Activated CD4-positive, alpha-beta memory T cell treated with anti-CD3 and anti-CD28 coated beads, Interleukin-2, amount 10 ng/mL, durations not matched to agents 7 days and 5 days (primary cell): ENCODE measurements at regions of chr12 and their contacts with region 1.

Region 1: DNA sequence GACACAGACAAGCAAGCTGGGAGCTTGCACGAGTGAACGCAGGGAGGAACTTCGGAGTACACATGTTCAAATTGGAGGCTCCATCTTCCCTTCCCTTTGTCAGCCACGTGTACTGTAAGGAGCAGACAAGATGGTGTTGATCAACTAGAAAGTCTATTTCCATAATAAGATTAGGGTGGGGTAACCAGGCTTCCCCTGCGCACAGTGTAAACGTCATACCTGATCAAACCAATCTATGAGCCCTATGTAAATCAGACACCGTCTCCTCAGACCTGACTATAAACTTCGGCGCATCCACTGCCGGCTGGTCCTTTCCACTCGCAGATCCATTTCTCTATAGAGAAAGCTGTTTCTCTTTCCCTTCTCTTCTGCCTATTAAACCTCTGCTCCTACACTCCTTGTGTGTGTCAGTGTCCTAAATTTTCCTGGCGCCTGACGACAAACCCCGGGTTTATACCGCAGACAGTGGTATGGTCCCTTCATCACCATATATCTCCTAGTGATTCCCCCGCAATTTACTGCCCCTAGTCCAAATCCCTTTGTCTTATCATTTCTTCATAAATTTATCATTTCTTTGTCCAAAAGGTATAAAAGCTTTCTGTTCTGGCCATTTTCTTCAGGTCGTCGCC is 7.5 kb upstream of the ETFBKMT start:
- DNase-seq: no peak
- H3K4me3 Mint-ChIP-seq: no peak overlapping the region
- H3K27ac Mint-ChIP-seq: no peak overlapping the region
- H3K4me1 Mint-ChIP-seq: peaks cover 12% of the 10 kb centered on the region
- H3K27me3 Mint-ChIP-seq: no peaks in the 10 kb centered on the region

Region 2: DNA sequence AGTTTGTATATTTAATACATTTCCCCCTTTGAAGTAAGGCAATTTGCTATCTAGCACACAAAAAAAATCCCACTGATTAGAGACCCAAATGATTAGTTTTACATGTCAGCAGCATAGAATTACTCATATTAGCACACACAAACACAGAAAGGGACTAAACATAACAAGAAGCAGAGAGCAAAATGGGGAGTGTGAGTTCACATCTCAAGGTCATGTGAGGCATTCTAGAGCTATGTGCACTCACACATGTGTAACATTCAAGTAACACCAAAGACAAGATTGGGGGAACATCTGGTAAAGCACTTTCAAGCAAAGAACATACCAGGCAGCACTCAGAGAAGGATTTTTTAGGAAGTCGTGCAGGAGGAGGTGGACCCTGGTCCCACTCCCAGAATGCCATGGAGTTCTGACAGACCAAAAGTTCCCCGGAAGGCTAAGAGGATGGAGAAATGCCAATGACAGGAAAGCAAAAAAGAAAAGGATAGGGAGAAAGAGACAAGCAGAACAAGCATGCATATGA is 220.2 kb before region 1 on chr12:
- CTCF ChIA-PET with region 1: no interaction called
- POLR2A ChIA-PET with region 1: no interaction called
- DNase-seq: no peak
- H3K4me3 Mint-ChIP-seq: no peak overlapping the region
- H3K27ac Mint-ChIP-seq: no peak overlapping the region
- H3K4me1 Mint-ChIP-seq: no peaks in the 10 kb centered on the region
- H3K27me3 Mint-ChIP-seq: peaks cover 16% of the 10 kb centered on the region

Region 3: DNA sequence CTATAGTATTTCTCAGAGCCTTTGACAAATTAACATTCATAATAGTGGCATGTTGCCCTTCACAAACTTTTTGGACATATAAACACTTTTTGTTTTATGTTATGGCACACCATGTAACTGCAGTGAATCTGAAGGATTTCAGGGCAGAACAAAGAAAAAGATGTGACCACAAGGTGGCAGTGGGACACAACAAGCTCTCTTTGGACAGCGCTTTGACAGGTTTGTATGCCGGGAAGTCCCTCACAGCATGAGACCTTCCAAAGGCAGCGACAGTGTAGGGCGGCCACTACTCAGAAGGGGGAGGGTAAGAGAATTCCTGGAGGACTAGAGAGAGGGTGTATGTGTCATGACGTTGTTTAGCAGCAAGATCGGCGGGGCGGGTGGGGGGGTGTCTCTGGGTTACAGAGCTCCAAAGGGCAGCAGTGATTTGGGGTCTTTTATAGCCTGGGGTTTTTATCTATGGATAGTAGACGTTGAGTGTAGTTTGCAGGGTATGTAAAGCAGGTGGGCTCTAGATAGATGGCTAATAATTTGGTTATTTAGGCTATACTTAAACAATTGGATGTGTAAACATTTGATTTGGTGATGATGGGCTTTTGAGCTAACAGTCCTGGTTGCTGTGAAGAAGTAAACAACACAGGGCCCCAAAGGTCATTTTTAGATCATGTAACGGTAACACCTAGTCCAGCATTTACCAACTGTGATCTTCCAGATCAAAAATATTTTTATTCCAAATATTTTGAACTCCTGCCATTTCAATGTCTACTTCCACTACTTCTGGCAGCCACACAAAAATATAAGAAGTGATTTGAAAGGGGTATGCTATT is 30.3 kb after region 1 on chr12:
- CTCF ChIA-PET with region 1: interaction called, 31 read pairs
- POLR2A ChIA-PET with region 1: interaction called, 9 read pairs
- DNase-seq: peak; percentile 74
- H3K4me3 Mint-ChIP-seq: no peak overlapping the region
- H3K27ac Mint-ChIP-seq: no peak overlapping the region
- H3K4me1 Mint-ChIP-seq: peaks cover 14% of the 10 kb centered on the region
- H3K27me3 Mint-ChIP-seq: no peaks in the 10 kb centered on the region

Region 4: GRCh38 chr12:31742891-31743290 is 90.9 kb after region 1 on chr12:
- CTCF ChIA-PET with region 1: no interaction called
- POLR2A ChIA-PET with region 1: no interaction called
- DNase-seq: no peak
- H3K4me3 Mint-ChIP-seq: no peak overlapping the region
- H3K27ac Mint-ChIP-seq: no peak overlapping the region
- H3K4me1 Mint-ChIP-seq: peaks cover 45% of the 10 kb centered on the region
- H3K27me3 Mint-ChIP-seq: no peaks in the 10 kb centered on the region

Region 5: GRCh38 chr12:32061033-32061432 is 409.0 kb after region 1 on chr12:
- CTCF ChIA-PET with region 1: interaction called, 22 read pairs
- POLR2A ChIA-PET with region 1: interaction called, 3 read pairs
- DNase-seq: no peak
- H3K4me3 Mint-ChIP-seq: no peak overlapping the region
- H3K27ac Mint-ChIP-seq: no peak overlapping the region
- H3K4me1 Mint-ChIP-seq: peaks cover 4% of the 10 kb centered on the region
- H3K27me3 Mint-ChIP-seq: no peaks in the 10 kb centered on the region

Region 6: GRCh38 chr12:32302218-32303173 is 650.5 kb after region 1 on chr12:
- CTCF ChIA-PET with region 1: interaction called, 93 read pairs
- POLR2A ChIA-PET with region 1: no interaction called
- DNase-seq: no peak
- H3K4me3 Mint-ChIP-seq: no peak overlapping the region
- H3K27ac Mint-ChIP-seq: no peak overlapping the region
- H3K4me1 Mint-ChIP-seq: no peaks in the 10 kb centered on the region
- H3K27me3 Mint-ChIP-seq: no peaks in the 10 kb centered on the region

Region 7: DNA sequence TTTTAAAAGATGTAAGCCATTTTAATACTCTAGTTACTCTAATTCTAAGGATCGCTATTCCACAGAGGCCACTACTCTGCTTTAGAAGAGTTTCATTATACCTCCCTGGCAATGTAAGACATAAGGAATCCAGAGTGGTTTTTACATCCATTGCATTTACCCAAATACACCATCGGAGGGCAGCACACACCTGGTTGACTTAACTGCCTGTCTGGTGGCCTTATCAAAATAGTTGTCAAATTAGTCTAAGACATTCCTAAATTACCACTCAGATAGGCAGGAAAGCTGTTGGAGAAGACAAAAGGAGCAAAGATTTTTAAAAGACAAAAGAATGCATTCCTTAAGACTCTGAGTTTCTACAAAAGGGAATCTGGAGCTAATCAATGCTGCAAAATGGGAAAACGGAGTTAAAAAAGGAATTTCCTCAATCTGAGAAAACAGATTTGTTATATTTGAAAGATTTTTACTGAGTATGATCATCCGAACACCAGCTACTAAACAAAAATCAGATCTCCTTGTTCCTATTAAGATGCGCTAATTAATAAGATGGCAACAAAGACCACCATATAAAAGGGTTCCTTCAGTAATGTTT is 713.6 kb after region 1 on chr12:
- CTCF ChIA-PET with region 1: interaction called, 10 read pairs
- POLR2A ChIA-PET with region 1: no interaction called
- DNase-seq: peak; percentile 45
- H3K4me3 Mint-ChIP-seq: no peak overlapping the region
- H3K27ac Mint-ChIP-seq: no peak overlapping the region
- H3K4me1 Mint-ChIP-seq: no peaks in the 10 kb centered on the region
- H3K27me3 Mint-ChIP-seq: no peaks in the 10 kb centered on the region